IMR-90 (cell line): ENCODE measurements at regions of chr7 and their contacts with region 1.

Region 1: GRCh38 chr7:94289071-94289470 is 105.6 kb upstream of the COL1A2 start:
- DNase-seq: peak; percentile 91
- ATAC-seq: peak; percentile 96
- H3K4me3 ChIP-seq: no peak overlapping the region
- H3K27ac ChIP-seq: no peak overlapping the region
- H3K4me1 ChIP-seq: no peaks in the 10 kb centered on the region
- H3K27me3 ChIP-seq: no peaks in the 10 kb centered on the region
- CTCF ChIP-seq: peak; percentile 100
- POLR2A ChIP-seq: peak; percentile 63
- RAD21 ChIP-seq: peak; percentile 100

Region 2: GRCh38 chr7:93350338-93350737 is 938.7 kb before region 1 on chr7:
- CTCF ChIA-PET with region 1: no interaction called
- POLR2A ChIA-PET with region 1: no interaction called
- dilution Hi-C with region 1: no loop called
- in situ Hi-C with region 1: no loop called
- intact Hi-C with region 1: no loop called
- DNase-seq: no peak
- ATAC-seq: no peak
- H3K4me3 ChIP-seq: no peak overlapping the region
- H3K27ac ChIP-seq: no peak overlapping the region
- H3K4me1 ChIP-seq: no peaks in the 10 kb centered on the region
- H3K27me3 ChIP-seq: no peaks in the 10 kb centered on the region
- CTCF ChIP-seq: no peak
- POLR2A ChIP-seq: no peak
- RAD21 ChIP-seq: no peak

Region 3: DNA sequence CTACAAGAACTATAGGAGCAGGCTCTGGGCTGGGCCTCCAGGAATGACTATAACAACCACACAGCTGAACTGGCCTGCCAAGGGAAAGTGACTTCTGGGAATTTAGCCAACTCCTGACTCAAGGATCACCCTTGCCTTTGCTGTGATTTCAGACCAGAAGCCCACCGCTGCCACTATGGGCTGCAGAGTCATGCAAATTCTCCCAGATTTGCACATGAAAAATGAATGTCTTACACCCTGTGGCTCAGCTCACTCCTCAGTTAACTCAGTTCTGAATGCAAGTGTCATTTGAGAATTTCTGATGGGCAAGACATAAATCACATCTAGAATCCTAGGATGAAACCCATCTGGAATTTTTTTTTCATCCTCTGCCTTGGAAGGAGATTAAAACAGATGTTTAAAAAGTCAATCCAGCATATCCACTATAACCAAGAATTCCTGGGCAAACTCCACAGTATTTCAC is 98.4 kb before region 1 on chr7:
- CTCF ChIA-PET with region 1: no interaction called
- POLR2A ChIA-PET with region 1: no interaction called
- dilution Hi-C with region 1: no loop called
- in situ Hi-C with region 1: no loop called
- intact Hi-C with region 1: no loop called
- DNase-seq: peak; percentile 98
- ATAC-seq: peak; percentile 97
- H3K4me3 ChIP-seq: no peak overlapping the region
- H3K27ac ChIP-seq: peak overlapping the region; percentile 0; the same call in 1 of the 2 replicates
- H3K4me1 ChIP-seq: peaks cover 2% of the 10 kb centered on the region; the same call in 1 of the 2 replicates
- H3K27me3 ChIP-seq: no peaks in the 10 kb centered on the region
- CTCF ChIP-seq: no peak
- POLR2A ChIP-seq: no peak
- RAD21 ChIP-seq: peak; percentile 27; the same call in 1 of the 2 replicates

Region 4: GRCh38 chr7:94436018-94436604 is 147.0 kb after region 1 on chr7:
- CTCF ChIA-PET with region 1: interaction called, 79 read pairs
- POLR2A ChIA-PET with region 1: interaction called, 4 read pairs
- dilution Hi-C with region 1: no loop called
- in situ Hi-C with region 1: no loop called
- intact Hi-C with region 1: loop called (anchors 1 kb)
- DNase-seq: peak; percentile 78
- ATAC-seq: peak; percentile 43
- H3K4me3 ChIP-seq: no peak overlapping the region
- H3K27ac ChIP-seq: no peak overlapping the region
- H3K4me1 ChIP-seq: peaks cover 8% of the 10 kb centered on the region
- H3K27me3 ChIP-seq: no peaks in the 10 kb centered on the region
- CTCF ChIP-seq: peak; percentile 81
- POLR2A ChIP-seq: no peak
- RAD21 ChIP-seq: peak; percentile 68

Region 5: GRCh38 chr7:94657771-94658693 is 369.0 kb after region 1 on chr7:
- CTCF ChIA-PET with region 1: interaction called, 3 read pairs
- POLR2A ChIA-PET with region 1: no interaction called
- dilution Hi-C with region 1: no loop called
- in situ Hi-C with region 1: loop called (anchors 10 kb)
- intact Hi-C with region 1: loop called (anchors 5 kb)
- DNase-seq: peak; percentile 90
- ATAC-seq: peak; percentile 91
- H3K4me3 ChIP-seq: peak overlapping the region; percentile 58
- H3K27ac ChIP-seq: no peak overlapping the region
- H3K4me1 ChIP-seq: no peaks in the 10 kb centered on the region
- H3K27me3 ChIP-seq: no peaks in the 10 kb centered on the region
- CTCF ChIP-seq: no peak
- POLR2A ChIP-seq: no peak
- RAD21 ChIP-seq: no peak

Region 6: GRCh38 chr7:94848531-94848930 is 559.5 kb after region 1 on chr7:
- CTCF ChIA-PET with region 1: no interaction called
- POLR2A ChIA-PET with region 1: no interaction called
- dilution Hi-C with region 1: no loop called
- in situ Hi-C with region 1: no loop called
- intact Hi-C with region 1: no loop called
- DNase-seq: no peak
- ATAC-seq: no peak
- H3K4me3 ChIP-seq: no peak overlapping the region
- H3K27ac ChIP-seq: no peak overlapping the region
- H3K4me1 ChIP-seq: no peaks in the 10 kb centered on the region
- H3K27me3 ChIP-seq: no peaks in the 10 kb centered on the region
- CTCF ChIP-seq: no peak
- POLR2A ChIP-seq: no peak
- RAD21 ChIP-seq: no peak

Region 7: GRCh38 chr7:95246831-95247370 is 957.8 kb after region 1 on chr7:
- CTCF ChIA-PET with region 1: no interaction called
- POLR2A ChIA-PET with region 1: no interaction called
- dilution Hi-C with region 1: no loop called
- in situ Hi-C with region 1: no loop called
- intact Hi-C with region 1: loop called (anchors 5 kb)
- DNase-seq: peak; percentile 62
- ATAC-seq: peak; percentile 76
- H3K4me3 ChIP-seq: no peak overlapping the region
- H3K27ac ChIP-seq: no peak overlapping the region
- H3K4me1 ChIP-seq: no peaks in the 10 kb centered on the region
- H3K27me3 ChIP-seq: peaks cover 4% of the 10 kb centered on the region
- CTCF ChIP-seq: peak; percentile 69
- POLR2A ChIP-seq: no peak
- RAD21 ChIP-seq: peak; percentile 72